Tibial artery (tissue), 4 donors: ENCODE measurements at regions of chr3 and their contacts with region 1.

Region 1: GRCh38 chr3:82133070-82133606 is 371.7 kb upstream of the GBE1 start:
- DNase-seq: peak in 1 of 2 donors; percentile 30
- H3K4me3 ChIP-seq: no peak overlapping the region
- H3K27ac ChIP-seq: no peak overlapping the region
- H3K4me1 ChIP-seq: no peaks in the 10 kb centered on the region
- H3K27me3 ChIP-seq: no peaks in the 10 kb centered on the region
- CTCF ChIP-seq: peak; percentile 79 to 82

Region 2: GRCh38 chr3:81419228-81419627 is 713.9 kb before region 1 on chr3:
- intact Hi-C with region 1: loop called (anchors 10 kb)
- DNase-seq: no peak
- H3K4me3 ChIP-seq: no peak overlapping the region
- H3K27ac ChIP-seq: no peak overlapping the region
- H3K4me1 ChIP-seq: no peaks in the 10 kb centered on the region
- H3K27me3 ChIP-seq: no peaks in the 10 kb centered on the region
- CTCF ChIP-seq: peak; percentile 48 to 61

Region 3: DNA sequence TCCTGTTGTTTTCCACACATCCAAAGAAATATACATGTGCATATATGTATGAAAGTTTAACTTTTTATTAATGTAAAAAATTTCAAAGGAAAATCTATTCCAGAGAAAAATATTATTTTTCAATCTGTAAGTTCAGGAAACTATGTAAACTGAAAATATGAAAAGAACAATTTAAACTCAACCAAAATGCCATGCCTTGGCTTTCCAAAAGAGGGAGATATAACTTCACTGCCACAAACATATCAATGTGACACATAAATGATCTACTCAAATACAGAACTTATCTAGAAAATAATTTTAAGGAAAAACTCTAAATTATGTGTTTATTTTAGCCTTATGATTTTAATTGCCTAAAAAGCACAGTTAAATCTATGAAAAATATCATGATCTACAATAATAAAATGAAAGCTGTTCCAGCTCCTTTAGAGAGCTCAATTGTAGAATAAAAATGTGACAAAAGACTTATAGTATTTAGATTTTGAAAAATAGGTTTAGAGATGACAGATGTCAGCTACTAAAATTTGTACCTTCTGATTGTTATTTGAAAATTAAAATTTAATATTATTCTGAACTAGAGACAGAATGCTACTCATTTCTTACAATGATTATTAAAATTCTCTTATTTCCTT is 466.5 kb before region 1 on chr3:
- intact Hi-C with region 1: loop called (anchors 10 kb)
- DNase-seq: no peak
- H3K4me3 ChIP-seq: no peak overlapping the region
- H3K27ac ChIP-seq: no peak overlapping the region
- H3K4me1 ChIP-seq: peaks cover 0 to 20% (median 4%) of the 10 kb centered on the region in 4 donors
- H3K27me3 ChIP-seq: no peaks in the 10 kb centered on the region
- CTCF ChIP-seq: peak; percentile 54 to 80